Natural killer cell (primary cell): ENCODE measurements at regions of chr11 and their contacts with region 1.

Region 1: GRCh38 chr11:61361686-61362541 is at the starts of genes CYB561A3 and TMEM138:
- DNase-seq: peak; percentile 80 to 91
- ATAC-seq: peak; percentile 92 to 99 (median 93)
- H3K4me3 ChIP-seq: peak within 1 kb of the TSS; percentile 90
- H3K4me3 Mint-ChIP-seq: peak within 1 kb of the TSS; percentile 99
- H3K27ac ChIP-seq: peak within 1 kb of the TSS; percentile 96
- H3K27ac Mint-ChIP-seq: peak within 1 kb of the TSS; percentile 94 to 98
- H3K4me1 ChIP-seq: peaks cover 42% of the 10 kb centered on the region
- H3K4me1 Mint-ChIP-seq: peaks cover 21 to 26% of the 10 kb centered on the region in 2 donors
- H3K27me3 ChIP-seq: no peaks in the 10 kb centered on the region
- H3K27me3 Mint-ChIP-seq: no peaks in the 10 kb centered on the region
- CTCF ChIP-seq: no peak
- total RNA-seq, gene CYB561A3: 24.6 to 33.5 (median 30.2) TPM
- total RNA-seq, gene TMEM138: 63.8 to 75.9 (median 66.5) TPM

Region 2: GRCh38 chr11:61392981-61393595 is 31.2 kb after region 1 on chr11:
- intact Hi-C with region 1: loop called (anchors 2 kb)
- DNase-seq: peak in 1 of 2 donors; percentile 59
- ATAC-seq: peak in 2 of 3 donors; percentile 12 to 23
- H3K4me3 ChIP-seq: peak overlapping the region; percentile 80
- H3K4me3 Mint-ChIP-seq: peak overlapping the region; percentile 92
- H3K27ac ChIP-seq: peak overlapping the region; percentile 81
- H3K27ac Mint-ChIP-seq: peak overlapping the region; percentile 87 to 94
- H3K4me1 ChIP-seq: peaks cover 21% of the 10 kb centered on the region
- H3K4me1 Mint-ChIP-seq: peaks cover 25% of the 10 kb centered on the region in 2 donors
- H3K27me3 ChIP-seq: no peaks in the 10 kb centered on the region
- H3K27me3 Mint-ChIP-seq: no peaks in the 10 kb centered on the region
- CTCF ChIP-seq: no peak

Region 3: GRCh38 chr11:61429691-61430582 is 68.0 kb after region 1 on chr11 and contains the starts of genes CPSF7 and SDHAF2:
- intact Hi-C with region 1: loop called (anchors 1 kb)
- DNase-seq: peak; percentile 97 to 98
- ATAC-seq: peak; percentile 83 to 94 (median 85)
- H3K4me3 ChIP-seq: peak within 1 kb of the TSS; percentile 77
- H3K4me3 Mint-ChIP-seq: peak within 1 kb of the TSS; percentile 96
- H3K27ac ChIP-seq: peak within 1 kb of the TSS; percentile 97
- H3K27ac Mint-ChIP-seq: peak within 1 kb of the TSS; percentile 99 to 100
- H3K4me1 ChIP-seq: peaks cover 15% of the 10 kb centered on the region
- H3K4me1 Mint-ChIP-seq: peaks cover 40 to 48% of the 10 kb centered on the region in 2 donors
- H3K27me3 ChIP-seq: no peaks in the 10 kb centered on the region
- H3K27me3 Mint-ChIP-seq: no peaks in the 10 kb centered on the region
- CTCF ChIP-seq: peak; percentile 3
- total RNA-seq, gene CPSF7: 99.5 to 120 (median 104) TPM
- total RNA-seq, gene SDHAF2: 40.2 to 50.4 (median 40.8) TPM

Region 4: DNA sequence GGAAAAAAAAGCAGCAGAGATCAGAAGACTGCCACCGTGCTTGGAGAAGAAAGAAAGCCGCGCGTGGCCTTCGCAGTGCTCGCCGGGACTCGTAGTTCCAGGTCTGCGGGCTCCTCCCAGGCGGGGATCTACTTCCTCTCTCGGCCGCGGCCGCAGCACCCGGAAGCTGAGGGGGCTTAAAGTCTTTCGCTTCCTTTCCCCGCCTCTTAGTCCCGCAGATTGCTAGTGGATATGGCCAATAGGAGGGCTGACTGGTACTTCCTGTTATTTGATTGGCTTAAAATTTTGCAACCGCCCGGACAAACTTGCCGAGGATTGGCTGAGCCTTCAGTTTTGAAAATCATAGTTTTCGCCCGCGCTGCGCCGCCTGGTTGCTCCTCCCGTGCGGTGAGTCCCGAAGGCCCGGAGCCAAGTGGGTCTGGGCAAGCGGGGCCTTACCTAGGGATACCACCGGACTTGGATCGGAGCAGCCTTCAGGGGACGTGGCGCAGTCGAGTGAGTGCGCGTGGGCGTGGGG is 761.8 kb after region 1 on chr11 and contains the start of gene INCENP:
- intact Hi-C with region 1: no loop called
- DNase-seq: peak; percentile 88 to 98
- ATAC-seq: peak; percentile 98 to 99 (median 99)
- H3K4me3 ChIP-seq: peak within 1 kb of the TSS; percentile 81
- H3K4me3 Mint-ChIP-seq: peak within 1 kb of the TSS; percentile 95
- H3K27ac ChIP-seq: peak within 1 kb of the TSS; percentile 59
- H3K27ac Mint-ChIP-seq: peak within 1 kb of the TSS; percentile 85 to 90
- H3K4me1 ChIP-seq: peaks cover 17% of the 10 kb centered on the region
- H3K4me1 Mint-ChIP-seq: peaks cover 27 to 30% of the 10 kb centered on the region in 2 donors
- H3K27me3 ChIP-seq: no peaks in the 10 kb centered on the region
- H3K27me3 Mint-ChIP-seq: peaks cover 0 to 6% of the 10 kb centered on the region in 2 donors
- CTCF ChIP-seq: no peak
- total RNA-seq, gene INCENP: 24.4 to 47.6 (median 27.3) TPM